AG04449 (cell line): ENCODE measurements at regions of chr20 and their contacts with region 1.

Region 1: GRCh38 chr20:62953839-62954703 is 1.6 kb downstream of the SLC17A9 start:
- DNase-seq: no peak
- H3K4me3 ChIP-seq: peak overlapping the region; percentile 49
- CTCF ChIP-seq: no peak

Region 2: GRCh38 chr20:62914970-62915457 is 39.1 kb before region 1 on chr20:
- CTCF ChIA-PET with region 1: no interaction called
- POLR2A ChIA-PET with region 1: no interaction called
- DNase-seq: no peak
- H3K4me3 ChIP-seq: no peak overlapping the region
- CTCF ChIP-seq: no peak

Region 3: DNA sequence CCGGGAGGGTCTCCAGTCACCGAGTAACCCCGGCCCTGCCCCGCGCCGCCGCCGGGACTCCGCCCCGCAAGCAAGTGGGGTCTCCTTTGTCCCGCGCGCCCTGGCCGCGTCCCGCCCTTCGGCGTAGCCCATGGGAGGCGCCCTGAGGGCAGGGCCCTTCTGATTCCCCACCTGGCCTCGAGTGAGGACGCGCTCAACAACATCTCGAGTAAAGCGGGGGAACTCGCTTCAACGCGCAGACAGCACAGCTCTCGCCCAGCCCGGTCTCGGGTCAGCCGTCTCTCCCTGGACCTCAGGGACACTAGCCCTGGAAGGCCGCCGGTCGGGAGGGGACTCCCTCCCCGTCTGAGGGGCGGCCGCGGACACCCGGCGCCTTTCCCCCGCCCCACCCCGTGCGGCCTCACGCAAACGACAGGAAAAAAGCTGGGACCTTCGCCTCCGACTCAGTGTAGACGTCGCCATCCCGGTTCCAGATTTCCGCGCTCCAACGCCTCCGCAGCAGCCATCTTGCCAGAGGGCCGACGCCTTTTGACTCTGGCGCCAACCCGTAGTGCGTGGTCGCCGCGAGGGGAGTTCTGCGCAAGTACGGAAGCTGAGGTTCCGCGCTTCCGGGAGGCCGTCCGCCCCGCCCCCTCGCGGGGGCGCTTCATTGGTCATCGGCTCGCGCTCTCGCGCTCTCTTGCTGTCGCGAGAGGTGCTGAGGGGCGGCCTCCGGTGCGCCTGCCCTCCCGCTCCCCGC is 16.5 kb before region 1 on chr20:
- CTCF ChIA-PET with region 1: interaction called, 7 read pairs
- POLR2A ChIA-PET with region 1: interaction called, 12 read pairs
- DNase-seq: peak; percentile 83
- H3K4me3 ChIP-seq: peak overlapping the region; percentile 94
- CTCF ChIP-seq: no peak

Region 4: DNA sequence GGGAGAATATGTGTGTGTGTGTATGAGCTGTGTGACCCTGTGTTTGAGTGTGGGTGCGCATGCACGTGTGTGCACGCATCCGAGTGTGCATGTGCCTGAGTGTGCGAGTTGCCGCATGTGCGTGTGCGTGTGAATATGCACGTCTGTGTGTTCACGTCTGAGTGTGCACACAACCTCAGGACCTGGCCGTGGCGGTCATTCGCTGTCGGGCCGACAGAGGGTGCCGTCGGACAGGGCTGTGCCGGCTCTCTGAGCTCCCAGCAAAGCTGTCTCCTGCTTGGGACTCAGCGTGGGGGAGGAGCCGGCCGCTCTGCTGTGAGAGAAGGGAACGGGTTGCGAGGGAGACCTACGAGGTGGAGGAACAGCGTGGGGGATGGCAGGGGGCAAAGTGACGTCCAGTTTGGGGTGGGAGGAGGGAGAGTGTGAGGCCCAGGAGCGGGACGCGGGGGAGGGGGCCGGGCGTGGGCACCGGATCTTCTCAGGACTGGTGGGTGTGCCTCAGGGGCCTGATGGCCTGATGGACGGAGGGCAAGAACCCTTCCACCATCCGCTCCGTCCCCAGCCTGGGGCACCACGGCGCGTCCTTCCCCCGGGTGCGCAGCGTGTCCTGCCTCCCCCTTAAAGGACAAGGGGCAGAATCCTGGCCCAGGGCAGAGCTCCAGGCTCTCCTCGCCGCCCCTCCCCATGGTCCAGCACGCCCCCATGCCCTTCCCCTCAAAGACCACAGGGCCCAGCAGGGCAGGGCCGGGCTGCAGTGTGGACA is 18.4 kb after region 1 on chr20:
- CTCF ChIA-PET with region 1: interaction called, 16 read pairs
- POLR2A ChIA-PET with region 1: interaction called, 3 read pairs
- DNase-seq: peak; percentile 3
- H3K4me3 ChIP-seq: peak overlapping the region; percentile 43
- CTCF ChIP-seq: peak; percentile 99